ENCODE measurements at regions of chr5 and their contacts with region 1.

Region 1: GRCh38 chr5:122163121-122164069 is 34.0 kb downstream of the ZNF474 start:
- DNase-seq: no peak
- H3K4me3 Mint-ChIP-seq: no peak overlapping the region
- H3K27ac Mint-ChIP-seq: no peak overlapping the region
- H3K4me1 Mint-ChIP-seq: no peaks in the 10 kb centered on the region
- H3K27me3 Mint-ChIP-seq: peaks cover 2% of the 10 kb centered on the region

Region 2: GRCh38 chr5:122126177-122126755 is 37.1 kb before region 1 on chr5:
- CTCF ChIA-PET with region 1: no interaction called
- POLR2A ChIA-PET with region 1: no interaction called
- intact Hi-C with region 1: no loop called
- DNase-seq: no peak
- H3K4me3 Mint-ChIP-seq: no peak overlapping the region
- H3K27ac Mint-ChIP-seq: no peak overlapping the region
- H3K4me1 Mint-ChIP-seq: no peaks in the 10 kb centered on the region
- H3K27me3 Mint-ChIP-seq: peaks cover 4% of the 10 kb centered on the region

Region 3: DNA sequence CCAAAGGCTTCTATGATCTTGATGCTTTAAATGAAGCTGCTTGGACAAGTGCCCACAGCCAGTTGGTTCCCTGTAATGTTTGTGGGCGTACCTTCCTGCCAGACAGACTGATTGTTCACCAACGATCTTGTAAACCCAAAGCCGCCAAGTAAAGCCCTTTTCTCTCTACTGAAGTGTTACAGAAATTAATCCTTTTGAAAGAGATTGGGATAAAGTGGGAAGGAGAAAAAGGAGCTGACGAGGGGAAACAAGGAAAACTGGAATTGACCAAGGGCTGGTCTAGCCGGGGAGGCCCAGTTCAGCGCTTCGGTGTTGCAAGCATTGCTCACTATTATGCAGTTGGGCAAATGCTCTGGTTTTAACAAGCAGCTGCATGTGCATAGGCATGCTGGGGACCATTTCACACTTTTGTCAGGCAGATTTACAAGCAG is 19.1 kb after region 1 on chr5:
- CTCF ChIA-PET with region 1: no interaction called
- POLR2A ChIA-PET with region 1: no interaction called
- intact Hi-C with region 1: loop called (anchors 2 kb)
- DNase-seq: no peak
- H3K4me3 Mint-ChIP-seq: no peak overlapping the region
- H3K27ac Mint-ChIP-seq: no peak overlapping the region
- H3K4me1 Mint-ChIP-seq: peaks cover 7% of the 10 kb centered on the region
- H3K27me3 Mint-ChIP-seq: peaks cover 10% of the 10 kb centered on the region

Region 4: DNA sequence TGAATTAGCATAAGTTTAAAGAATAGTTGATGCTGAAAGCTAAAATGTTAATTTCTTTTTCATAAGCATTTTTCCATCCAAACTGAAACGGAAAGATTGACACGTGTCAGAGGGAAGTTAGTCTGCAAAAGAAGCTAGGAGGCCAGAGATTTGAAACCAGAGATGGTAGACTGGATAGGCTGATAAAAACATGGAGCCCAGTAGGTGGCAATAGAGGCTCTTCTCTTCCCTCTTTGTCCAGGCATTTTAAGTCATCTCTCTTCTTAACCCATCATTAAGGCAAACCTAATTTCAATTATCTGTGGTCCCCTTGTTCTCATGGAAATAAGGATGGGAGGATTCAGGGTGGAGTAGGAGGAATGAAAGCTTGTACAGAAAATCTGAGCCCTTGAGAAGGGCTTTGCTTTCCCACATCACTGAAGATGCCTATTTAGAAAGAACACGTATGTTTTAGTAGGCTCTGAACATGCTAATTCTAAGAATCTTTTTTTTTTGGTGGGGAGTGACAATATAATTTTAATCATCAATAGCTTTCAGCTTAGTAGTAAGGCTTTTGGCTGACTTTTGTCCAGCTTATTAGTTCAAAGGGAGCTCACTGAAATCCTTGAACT is 32.5 kb after region 1 on chr5:
- CTCF ChIA-PET with region 1: no interaction called
- POLR2A ChIA-PET with region 1: no interaction called
- intact Hi-C with region 1: no loop called
- DNase-seq: no peak
- H3K4me3 Mint-ChIP-seq: no peak overlapping the region
- H3K27ac Mint-ChIP-seq: no peak overlapping the region
- H3K4me1 Mint-ChIP-seq: no peaks in the 10 kb centered on the region
- H3K27me3 Mint-ChIP-seq: peaks cover 5% of the 10 kb centered on the region

Region 5: GRCh38 chr5:122220511-122220910 is 57.1 kb after region 1 on chr5:
- CTCF ChIA-PET with region 1: no interaction called
- POLR2A ChIA-PET with region 1: no interaction called
- intact Hi-C with region 1: no loop called
- DNase-seq: no peak
- H3K4me3 Mint-ChIP-seq: no peak overlapping the region
- H3K27ac Mint-ChIP-seq: no peak overlapping the region
- H3K4me1 Mint-ChIP-seq: no peaks in the 10 kb centered on the region
- H3K27me3 Mint-ChIP-seq: no peaks in the 10 kb centered on the region